Posterior vena cava (tissue), 2 donors: ENCODE measurements at regions of chr6 and their contacts with region 1.

Region 1: DNA sequence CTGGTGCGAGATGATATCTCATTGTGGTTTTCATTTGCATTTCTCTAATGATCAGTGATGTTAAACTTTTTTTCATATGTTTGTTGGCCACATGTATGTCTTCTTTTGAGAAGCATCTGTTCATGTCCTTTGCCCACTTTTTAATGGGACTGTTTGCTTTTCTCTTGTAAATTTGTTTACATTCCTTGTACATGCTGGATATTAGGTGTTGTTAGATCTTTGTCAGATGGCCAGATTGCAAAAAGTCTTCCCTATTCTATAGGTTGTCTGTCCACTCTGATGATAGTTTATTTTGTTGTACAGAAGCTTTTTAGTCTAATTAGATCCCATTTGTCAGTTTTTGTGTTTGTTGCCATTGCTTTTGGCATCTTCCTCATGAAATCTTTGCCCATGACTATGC is 172.4 kb downstream of the TBC1D32 start:
- DNase-seq: no peak

Region 2: DNA sequence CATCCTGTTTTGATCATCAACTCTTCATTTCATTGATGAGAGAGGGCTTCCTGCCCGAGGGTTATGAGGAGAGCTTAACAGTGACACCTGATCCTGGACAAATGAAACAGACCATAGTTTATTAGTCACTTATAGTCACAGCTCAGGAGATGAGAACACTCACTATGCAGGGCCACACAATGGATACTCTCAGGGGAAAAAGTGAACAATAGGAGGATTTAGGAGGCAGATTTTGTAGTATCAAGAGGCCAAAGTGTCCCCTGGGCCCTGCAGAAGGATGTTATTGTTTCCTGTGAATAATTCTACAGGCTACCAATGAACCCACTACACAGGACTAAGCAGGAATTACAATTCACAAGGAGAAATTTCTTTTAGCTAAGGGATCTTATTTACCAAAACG is 1039.5 kb before region 1 on chr6:
- intact Hi-C with region 1: loop called in 1 of 2 experiments (anchors 10 kb)
- DNase-seq: no peak